AG04449 (cell line): ENCODE measurements at regions of chr11 and their contacts with region 1.

Region 1: DNA sequence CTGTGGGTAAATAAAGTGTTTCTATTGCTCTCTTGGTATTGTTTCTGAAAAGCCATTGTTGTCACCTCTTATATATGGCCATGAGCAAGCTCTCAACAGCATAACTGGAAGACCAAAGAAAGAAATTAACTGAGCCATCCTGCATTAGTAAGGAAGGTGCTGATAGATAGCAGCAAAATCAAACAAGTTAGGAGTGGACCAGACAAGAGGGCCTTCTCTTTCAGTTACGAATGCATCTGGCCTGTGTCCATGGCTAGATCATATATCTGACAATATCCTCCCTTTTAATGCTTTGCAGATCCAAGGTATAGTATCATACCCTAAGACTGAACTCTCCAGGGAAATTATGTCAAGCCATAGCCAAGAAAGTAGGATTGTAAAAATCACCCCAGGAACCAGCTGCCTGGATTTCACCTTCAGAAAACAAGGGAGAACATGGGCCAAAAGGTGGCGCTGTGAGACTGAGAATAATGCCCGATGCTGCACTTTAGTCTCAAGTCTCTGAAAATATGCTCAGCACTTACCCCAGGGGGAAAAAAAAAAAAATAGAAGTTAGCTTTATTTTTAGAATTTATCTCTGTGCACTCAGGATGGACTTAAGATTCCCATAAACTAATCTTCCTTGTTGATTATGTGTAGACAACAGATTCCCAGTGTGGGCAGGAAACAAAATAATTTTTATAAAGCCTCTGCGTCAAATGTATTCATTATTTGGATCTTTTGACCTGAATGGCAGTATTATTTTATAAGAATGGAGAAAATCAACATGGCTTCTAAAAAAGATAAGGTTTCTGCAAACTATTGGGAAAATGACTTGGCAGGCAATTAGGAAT is 415.1 kb downstream of the ETS1 start:
- DNase-seq: peak; percentile 41
- H3K4me3 ChIP-seq: no peak overlapping the region
- CTCF ChIP-seq: peak; percentile 70

Region 2: GRCh38 chr11:128279866-128280265 is 107.6 kb after region 1 on chr11:
- CTCF ChIA-PET with region 1: interaction called, 12 read pairs
- POLR2A ChIA-PET with region 1: interaction called, 3 read pairs
- DNase-seq: peak; percentile 34
- H3K4me3 ChIP-seq: no peak overlapping the region
- CTCF ChIP-seq: no peak

Region 3: DNA sequence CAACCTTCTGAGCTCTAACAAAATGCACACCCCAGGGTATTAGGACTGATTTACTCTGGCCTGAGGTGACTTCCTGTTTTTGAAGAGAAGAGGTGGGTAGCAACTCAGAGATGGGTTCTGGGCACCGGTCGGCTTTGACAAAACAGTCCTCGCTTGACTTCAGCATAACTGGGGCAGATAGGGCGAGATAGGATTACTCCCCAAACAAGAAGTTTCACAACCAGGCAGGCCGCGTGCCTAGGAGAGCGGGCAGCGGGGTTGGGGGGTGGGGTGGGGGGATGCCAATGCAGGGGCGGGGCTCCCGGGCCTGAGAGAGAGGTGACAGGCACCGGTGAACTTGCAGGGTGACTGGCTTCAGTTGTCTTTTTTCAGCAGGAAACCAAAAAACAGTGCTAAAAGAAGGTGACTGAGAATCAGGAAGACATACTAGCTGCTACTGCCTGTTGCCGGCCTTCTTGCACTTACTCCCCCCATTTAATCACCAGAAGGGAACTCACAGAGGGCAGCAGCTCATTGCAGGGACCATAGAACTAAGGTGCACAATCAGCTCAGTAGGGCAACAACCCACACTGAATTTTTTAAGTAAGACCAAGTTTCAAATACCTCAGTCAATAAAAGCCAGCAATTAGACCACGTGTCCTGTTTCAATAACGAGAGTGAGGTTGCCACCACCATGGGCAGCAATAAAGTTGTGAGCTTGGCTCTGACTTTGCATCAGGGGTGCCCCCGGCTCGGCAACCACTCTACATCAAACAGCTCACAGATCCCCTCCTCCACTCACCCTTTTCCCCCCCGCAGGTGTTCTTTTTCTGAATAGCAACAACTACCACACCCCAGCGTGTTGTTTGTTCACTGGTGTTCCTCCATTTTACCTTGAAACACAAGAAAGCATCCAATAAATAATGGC is 452.3 kb after region 1 on chr11:
- CTCF ChIA-PET with region 1: interaction called, 490 read pairs
- POLR2A ChIA-PET with region 1: interaction called, 3 read pairs
- DNase-seq: no peak
- H3K4me3 ChIP-seq: no peak overlapping the region
- CTCF ChIP-seq: no peak

Region 4: GRCh38 chr11:128824191-128825049 is 652.2 kb after region 1 on chr11:
- CTCF ChIA-PET with region 1: interaction called, 187 read pairs
- POLR2A ChIA-PET with region 1: no interaction called
- DNase-seq: no peak
- H3K4me3 ChIP-seq: no peak overlapping the region
- CTCF ChIP-seq: no peak

Region 5: GRCh38 chr11:128948589-128948988 is 776.3 kb after region 1 on chr11:
- CTCF ChIA-PET with region 1: interaction called, 10 read pairs
- POLR2A ChIA-PET with region 1: no interaction called
- DNase-seq: no peak
- H3K4me3 ChIP-seq: no peak overlapping the region
- CTCF ChIP-seq: no peak